ENCODE measurements at regions of chr12 and their contacts with region 1.

Region 1: DNA sequence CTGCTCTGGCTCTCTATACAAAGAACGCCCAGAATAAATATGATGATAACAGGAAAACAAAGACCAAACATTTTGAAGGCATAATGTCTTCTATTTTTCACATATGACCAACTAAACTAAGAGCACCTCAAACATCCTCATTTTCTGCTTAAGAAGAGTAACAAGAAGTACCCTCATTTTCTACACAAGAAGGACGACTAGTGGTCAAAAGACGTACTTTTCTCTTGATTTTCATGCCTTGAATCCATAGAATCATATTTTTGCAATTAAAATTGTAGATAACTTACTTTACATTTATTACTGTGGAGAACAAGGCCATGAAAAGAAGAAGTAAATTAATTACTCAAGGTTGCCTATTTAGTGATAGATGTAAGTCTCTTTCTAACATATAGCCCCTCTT is 358.6 kb downstream of the DUSP6 start:
- DNase-seq: no peak
- H3K4me3 Mint-ChIP-seq: no peak overlapping the region
- H3K27ac Mint-ChIP-seq: no peak overlapping the region
- H3K4me1 Mint-ChIP-seq: no peaks in the 10 kb centered on the region
- H3K27me3 Mint-ChIP-seq: peaks cover 31% of the 10 kb centered on the region

Region 2: GRCh38 chr12:88111074-88111652 is 882.5 kb before region 1 on chr12:
- intact Hi-C with region 1: loop called (anchors 10 kb)
- DNase-seq: no peak
- H3K4me3 Mint-ChIP-seq: no peak overlapping the region
- H3K27ac Mint-ChIP-seq: peak overlapping the region; percentile 46
- H3K4me1 Mint-ChIP-seq: peaks cover 3% of the 10 kb centered on the region
- H3K27me3 Mint-ChIP-seq: no peaks in the 10 kb centered on the region

Region 3: GRCh38 chr12:89029961-89030360 is 36.3 kb after region 1 on chr12:
- intact Hi-C with region 1: no loop called
- DNase-seq: no peak
- H3K4me3 Mint-ChIP-seq: no peak overlapping the region
- H3K27ac Mint-ChIP-seq: no peak overlapping the region
- H3K4me1 Mint-ChIP-seq: peaks cover 50% of the 10 kb centered on the region
- H3K27me3 Mint-ChIP-seq: no peaks in the 10 kb centered on the region

Measured in activated T-helper 2 cell treated with anti-CD3 and anti-CD28 coated beads, Interferon-gamma antibody, Interleukin-2, Interleukin-4, amounts not matched to agents 10 μg/mL and 5 μg/mL and 100 μg/mL, durations not matched to agents 14 hours and 24 hours and 36 hours (primary cell).